ENCODE measurements at regions of chr5 and their contacts with region 1.

Region 1: DNA sequence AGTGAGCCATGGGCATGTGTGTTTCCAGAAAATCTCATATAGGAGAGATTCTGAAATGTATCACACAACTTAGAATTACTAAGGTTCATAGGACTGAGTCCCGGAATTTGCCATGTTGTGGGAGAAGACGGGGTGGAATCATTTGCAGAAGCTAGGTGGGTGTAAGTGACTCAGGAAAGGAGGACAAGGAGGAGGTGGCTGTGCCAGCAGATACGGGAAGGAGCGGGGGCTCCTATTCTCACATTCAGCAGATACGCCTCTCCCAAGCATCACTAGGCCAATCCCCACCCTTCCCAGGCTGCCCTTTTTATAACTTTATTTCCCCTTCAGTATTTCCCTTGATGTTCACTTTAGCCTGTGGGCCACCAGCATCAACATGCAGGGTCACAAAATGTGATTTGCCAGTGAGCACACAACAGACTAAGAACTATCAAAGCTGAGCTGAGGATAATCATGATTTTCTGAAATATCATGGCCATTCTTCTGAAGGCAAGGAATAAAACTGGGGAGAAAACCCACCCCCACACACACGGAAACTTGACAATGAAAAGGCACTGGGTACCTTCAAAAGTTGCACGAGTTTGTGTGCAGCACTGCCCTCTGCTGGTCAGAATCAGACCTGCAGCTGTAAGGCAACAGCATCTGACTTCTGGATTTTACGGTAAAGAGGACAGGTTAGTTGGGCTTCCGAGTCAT is 133.2 kb downstream of the MTX3 start:
- DNase-seq: peak; percentile 76 to 77
- ATAC-seq: peak in 7 of 8 donors; percentile 51 to 72 (median 62)
- H3K4me3 ChIP-seq: no peak overlapping the region
- H3K27ac ChIP-seq: peak overlapping the region in 1 of 10 donors; percentile 6
- H3K4me1 ChIP-seq: peaks cover 0 to 22% (median 3%) of the 10 kb centered on the region in 9 donors
- H3K27me3 ChIP-seq: no peaks in the 10 kb centered on the region
- CTCF ChIP-seq: peak; percentile 93 to 98 (median 96)

Region 2: DNA sequence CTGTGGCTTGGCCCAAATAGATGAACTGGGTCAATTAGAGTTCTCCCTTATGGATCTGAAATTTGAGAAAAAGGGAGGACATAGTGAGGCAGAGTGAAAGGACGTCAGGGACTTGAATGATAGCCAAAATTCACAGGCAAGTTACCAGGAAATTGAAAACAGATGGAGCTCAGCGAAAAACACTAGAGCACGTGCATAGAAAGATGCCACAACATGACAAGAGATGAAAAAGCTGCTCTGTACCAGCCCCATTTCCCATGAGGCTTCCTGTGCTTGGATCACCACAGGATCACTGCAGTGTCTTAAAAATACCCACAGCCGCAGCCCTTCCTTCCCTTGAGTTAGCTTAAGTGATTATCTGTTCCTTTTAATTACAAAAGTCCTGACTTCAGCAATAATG is 304.9 kb before region 1 on chr5:
- intact Hi-C with region 1: loop called in 1 of 10 experiments (anchors 5 kb)
- DNase-seq: no peak
- ATAC-seq: no peak
- H3K4me3 ChIP-seq: no peak overlapping the region
- H3K27ac ChIP-seq: no peak overlapping the region
- H3K4me1 ChIP-seq: peaks cover 0 to 9% (median 0%) of the 10 kb centered on the region in 9 donors
- H3K27me3 ChIP-seq: no peaks in the 10 kb centered on the region
- CTCF ChIP-seq: no peak

Region 3: GRCh38 chr5:79612667-79613198 is 245.1 kb before region 1 on chr5:
- intact Hi-C with region 1: loop called in 1 of 10 experiments (anchors 5 kb)
- DNase-seq: no peak
- ATAC-seq: peak; percentile 4 to 41 (median 16)
- H3K4me3 ChIP-seq: peak overlapping the region; percentile 67 to 87 (median 82)
- H3K27ac ChIP-seq: peak overlapping the region; percentile 72 to 96 (median 90)
- H3K4me1 ChIP-seq: peaks cover 4 to 42% (median 27%) of the 10 kb centered on the region in 9 donors
- H3K27me3 ChIP-seq: no peaks in the 10 kb centered on the region
- CTCF ChIP-seq: no peak

Region 4: GRCh38 chr5:79689541-79690466 is 168.1 kb before region 1 on chr5 and contains the start of gene CMYA5:
- intact Hi-C with region 1: loop called in 5 of 10 experiments (anchors 5 to 10 kb)
- DNase-seq: peak; percentile 63 to 67
- ATAC-seq: peak; percentile 69 to 89 (median 76)
- H3K4me3 ChIP-seq: peak within 1 kb of the TSS; percentile 46 to 68 (median 60)
- H3K27ac ChIP-seq: peak within 1 kb of the TSS; percentile 83 to 99 (median 90)
- H3K4me1 ChIP-seq: peaks cover 0 to 15% (median 2%) of the 10 kb centered on the region in 9 donors
- H3K27me3 ChIP-seq: no peaks in the 10 kb centered on the region
- CTCF ChIP-seq: no peak
- total RNA-seq, gene CMYA5: 771 to 1,721 (median 1,115) TPM

Region 5: GRCh38 chr5:79702606-79703382 is 155.1 kb before region 1 on chr5:
- intact Hi-C with region 1: loop called in 5 of 10 experiments (anchors 5 to 10 kb)
- DNase-seq: no peak
- ATAC-seq: no peak
- H3K4me3 ChIP-seq: no peak overlapping the region
- H3K27ac ChIP-seq: peak overlapping the region in 8 of 10 donors; percentile 10 to 99 (median 66)
- H3K4me1 ChIP-seq: peaks cover 0 to 71% (median 37%) of the 10 kb centered on the region in 9 donors
- H3K27me3 ChIP-seq: no peaks in the 10 kb centered on the region
- CTCF ChIP-seq: peak; percentile 20 to 66 (median 56)